Psoas muscle (tissue), 8 donors: ENCODE measurements at regions of chrX and their contacts with region 1.

Region 1: GRCh38 chrX:24241822-24242648 is 71.8 kb downstream of the SUPT20HL2 start:
- DNase-seq: no peak
- ATAC-seq: peak in 3 of 4 donors; percentile 12 to 59 (median 32)
- H3K4me3 ChIP-seq: no peak overlapping the region
- H3K27ac ChIP-seq: no peak overlapping the region
- H3K4me1 ChIP-seq: no peaks in the 10 kb centered on the region
- H3K27me3 ChIP-seq: no peaks in the 10 kb centered on the region
- CTCF ChIP-seq: peak; percentile 46

Region 2: DNA sequence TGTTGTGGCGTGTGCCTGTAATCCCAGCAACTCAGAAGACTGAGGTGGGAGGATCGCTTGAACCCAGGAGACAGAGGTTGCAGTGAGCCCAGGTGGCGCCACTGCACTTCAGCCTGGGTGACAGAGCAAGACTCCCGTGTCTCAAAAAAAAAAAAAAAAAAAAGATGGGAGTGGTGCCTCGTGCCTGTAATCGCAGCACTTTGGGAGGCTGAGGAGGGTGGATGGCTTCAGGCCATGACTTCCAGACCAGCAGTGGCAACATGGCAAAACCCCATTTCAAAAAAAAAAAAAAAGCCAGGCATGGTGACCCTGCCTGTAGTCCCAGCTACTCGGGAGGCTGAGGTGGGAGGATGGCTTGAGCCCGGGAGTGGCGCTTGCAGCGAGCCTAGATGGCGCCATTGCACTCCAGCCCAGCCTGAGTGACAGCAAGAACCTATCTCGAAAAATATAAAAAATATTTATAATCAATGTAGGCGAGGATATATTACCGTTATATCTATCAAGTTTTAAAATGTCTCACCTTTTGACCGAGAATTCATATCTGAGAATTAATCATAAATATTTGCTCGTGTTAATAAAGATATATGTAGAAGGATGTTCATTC is 160.3 kb before region 1 on chrX:
- intact Hi-C with region 1: loop called (anchors 10 kb)
- DNase-seq: peak; percentile 27 to 71
- ATAC-seq: peak; percentile 44 to 84 (median 76)
- H3K4me3 ChIP-seq: no peak overlapping the region
- H3K27ac ChIP-seq: no peak overlapping the region
- H3K4me1 ChIP-seq: no peaks in the 10 kb centered on the region
- H3K27me3 ChIP-seq: no peaks in the 10 kb centered on the region
- CTCF ChIP-seq: peak; percentile 42

Region 3: DNA sequence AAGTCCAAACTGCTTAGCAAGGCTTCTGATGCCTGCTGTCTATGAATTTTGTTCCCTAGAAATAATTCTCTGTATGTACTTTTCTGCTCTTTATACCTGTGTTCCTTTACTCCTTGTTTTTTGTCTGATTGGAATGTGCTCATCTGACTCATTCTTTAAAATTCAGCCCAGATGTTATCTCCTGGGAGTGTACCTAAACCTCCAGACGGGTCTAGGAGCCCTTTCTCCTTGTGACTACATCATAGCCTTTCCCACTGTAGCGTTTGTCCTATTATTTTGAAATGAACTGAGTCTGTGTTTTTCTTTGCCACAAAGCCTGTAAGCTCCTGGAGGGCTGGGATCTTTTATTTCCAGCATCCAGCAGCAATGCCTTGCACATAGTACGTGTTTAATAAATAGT is 478.0 kb after region 1 on chrX:
- intact Hi-C with region 1: no loop called
- DNase-seq: no peak
- ATAC-seq: no peak
- H3K4me3 ChIP-seq: no peak overlapping the region
- H3K27ac ChIP-seq: no peak overlapping the region
- H3K4me1 ChIP-seq: no peaks in the 10 kb centered on the region
- H3K27me3 ChIP-seq: no peaks in the 10 kb centered on the region
- CTCF ChIP-seq: no peak